HCT116 (cell line): ENCODE measurements at regions of chr22 and their contacts with region 1.

Region 1: GRCh38 chr22:20606041-20606783 is 98.8 kb downstream of the MED15 start:
- DNase-seq: peak; percentile 83
- ATAC-seq: peak; percentile 98
- H3K4me3 ChIP-seq: no peak overlapping the region
- H3K27ac ChIP-seq: no peak overlapping the region
- H3K4me1 ChIP-seq: peaks cover 4 to 11% of the 10 kb centered on the region in 2 experiments; a peak in 3 of 4 replicates
- H3K27me3 ChIP-seq: no peaks in the 10 kb centered on the region
- CTCF ChIP-seq: peak; percentile 86 to 95 (median 87)
- POLR2A ChIP-seq: no peak
- RAD21 ChIP-seq: peak; percentile 91

Region 2: DNA sequence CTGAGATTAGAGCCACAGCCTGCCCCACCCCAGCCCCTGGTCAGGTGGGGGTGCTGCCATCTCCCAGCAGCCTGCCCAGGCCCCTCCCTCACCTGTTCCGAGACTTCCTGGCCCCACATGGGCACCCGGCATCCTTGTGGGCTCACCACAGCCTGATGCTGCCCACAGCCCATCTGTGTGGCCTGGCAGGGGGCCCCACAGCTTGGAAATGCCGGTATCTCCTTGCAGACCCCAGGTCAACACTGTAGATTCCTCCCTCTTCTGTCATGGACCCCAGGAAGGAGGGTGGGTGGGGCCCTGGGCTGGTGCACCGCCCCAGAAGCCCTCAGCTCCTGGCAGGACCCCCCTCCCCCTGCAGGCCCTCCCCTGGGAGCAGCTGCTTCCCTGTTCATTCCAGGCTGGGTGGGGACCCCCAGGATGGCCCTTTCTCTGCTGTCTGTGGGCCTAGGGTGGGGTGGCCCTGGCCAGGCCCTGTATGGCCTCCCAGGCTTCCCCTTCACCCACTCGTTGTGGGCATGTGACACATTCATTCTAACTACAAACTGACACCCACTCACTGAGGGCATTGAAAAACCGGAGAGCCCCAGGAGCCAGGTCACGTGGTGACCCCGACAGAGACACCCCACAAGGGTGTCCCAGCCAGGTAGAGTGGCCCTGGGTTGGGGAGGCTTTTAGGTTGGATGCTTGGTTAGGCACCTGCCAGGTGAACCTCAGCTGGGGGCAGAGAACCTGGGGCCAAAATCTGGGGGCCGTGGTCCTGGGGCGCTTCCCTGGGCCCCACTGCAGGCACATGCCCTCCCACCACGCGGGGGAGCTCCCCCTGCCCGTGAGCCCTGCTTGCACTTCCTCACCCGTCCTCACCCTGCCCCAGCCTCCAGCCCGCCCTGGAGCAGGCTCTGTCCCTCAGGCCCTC is 411.3 kb before region 1 on chr22:
- CTCF ChIA-PET with region 1: no interaction called
- POLR2A ChIA-PET with region 1: no interaction called
- RAD21 ChIA-PET with region 1: no interaction called
- intact Hi-C with region 1: no loop called
- DNase-seq: no peak
- ATAC-seq: no peak
- H3K4me3 ChIP-seq: no peak overlapping the region
- H3K27ac ChIP-seq: no peak overlapping the region
- H3K4me1 ChIP-seq: no peaks in the 10 kb centered on the region
- H3K27me3 ChIP-seq: 0 out of 2 replicates have a peak, but pooled peaks cover 3% of the 10 kb centered on the region
- CTCF ChIP-seq: no peak
- POLR2A ChIP-seq: no peak
- RAD21 ChIP-seq: no peak

Region 3: DNA sequence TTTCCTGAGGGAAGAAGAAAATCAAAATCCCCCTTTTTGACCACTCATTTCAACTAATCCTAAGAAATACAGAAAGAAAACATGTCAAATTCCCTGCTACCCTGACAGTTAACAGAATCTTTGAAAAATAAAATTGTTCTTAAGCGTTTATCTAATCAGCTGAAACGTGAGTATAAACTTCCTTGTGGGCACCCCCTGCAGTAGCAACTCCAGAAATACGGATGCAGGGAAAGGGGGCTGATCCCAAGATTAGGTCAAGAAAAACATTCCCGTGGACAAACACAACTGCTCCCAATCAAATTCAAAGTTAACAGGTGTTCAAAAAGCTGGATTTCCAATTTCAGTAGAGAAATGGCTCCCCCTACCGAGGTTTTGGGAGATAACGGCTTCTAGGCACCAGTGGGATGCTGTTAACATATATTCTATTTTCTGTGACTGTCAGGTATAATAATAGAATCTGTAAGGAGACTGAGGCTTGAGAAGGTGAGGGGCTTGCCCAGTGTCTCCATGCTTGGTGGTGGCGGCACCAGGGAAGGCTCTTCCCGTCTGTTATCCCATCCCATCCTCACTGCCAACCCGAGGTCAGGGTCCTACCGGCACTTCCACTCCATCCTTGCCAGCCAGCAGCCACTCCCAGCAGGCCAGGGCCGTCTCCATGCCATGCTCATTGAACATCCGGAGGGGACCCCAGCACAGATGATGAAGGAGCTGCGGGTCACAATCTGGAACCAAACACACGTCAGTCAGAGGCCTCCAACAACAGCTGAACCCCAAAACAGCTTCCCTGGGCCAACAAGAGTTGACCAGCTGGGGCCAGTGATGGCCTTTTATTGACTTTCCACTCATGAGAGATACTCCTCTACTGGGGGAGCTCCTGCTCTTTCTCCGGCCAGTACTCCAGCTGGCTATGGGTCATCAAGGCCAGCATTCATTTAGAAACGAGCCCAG is 135.7 kb after region 1 on chr22:
- CTCF ChIA-PET with region 1: interaction called, 5 read pairs
- POLR2A ChIA-PET with region 1: no interaction called
- RAD21 ChIA-PET with region 1: no interaction called
- intact Hi-C with region 1: loop called (anchors 2 kb)
- DNase-seq: peak; percentile 18
- ATAC-seq: peak; percentile 63; the same call in 1 of the 2 replicates
- H3K4me3 ChIP-seq: no peak overlapping the region
- H3K27ac ChIP-seq: no peak overlapping the region
- H3K4me1 ChIP-seq: no peaks in the 10 kb centered on the region
- H3K27me3 ChIP-seq: no peaks in the 10 kb centered on the region
- CTCF ChIP-seq: peak; percentile 57 to 73 (median 64); a peak in 5 of 6 replicates
- POLR2A ChIP-seq: no peak
- RAD21 ChIP-seq: peak; percentile 70

Region 4: DNA sequence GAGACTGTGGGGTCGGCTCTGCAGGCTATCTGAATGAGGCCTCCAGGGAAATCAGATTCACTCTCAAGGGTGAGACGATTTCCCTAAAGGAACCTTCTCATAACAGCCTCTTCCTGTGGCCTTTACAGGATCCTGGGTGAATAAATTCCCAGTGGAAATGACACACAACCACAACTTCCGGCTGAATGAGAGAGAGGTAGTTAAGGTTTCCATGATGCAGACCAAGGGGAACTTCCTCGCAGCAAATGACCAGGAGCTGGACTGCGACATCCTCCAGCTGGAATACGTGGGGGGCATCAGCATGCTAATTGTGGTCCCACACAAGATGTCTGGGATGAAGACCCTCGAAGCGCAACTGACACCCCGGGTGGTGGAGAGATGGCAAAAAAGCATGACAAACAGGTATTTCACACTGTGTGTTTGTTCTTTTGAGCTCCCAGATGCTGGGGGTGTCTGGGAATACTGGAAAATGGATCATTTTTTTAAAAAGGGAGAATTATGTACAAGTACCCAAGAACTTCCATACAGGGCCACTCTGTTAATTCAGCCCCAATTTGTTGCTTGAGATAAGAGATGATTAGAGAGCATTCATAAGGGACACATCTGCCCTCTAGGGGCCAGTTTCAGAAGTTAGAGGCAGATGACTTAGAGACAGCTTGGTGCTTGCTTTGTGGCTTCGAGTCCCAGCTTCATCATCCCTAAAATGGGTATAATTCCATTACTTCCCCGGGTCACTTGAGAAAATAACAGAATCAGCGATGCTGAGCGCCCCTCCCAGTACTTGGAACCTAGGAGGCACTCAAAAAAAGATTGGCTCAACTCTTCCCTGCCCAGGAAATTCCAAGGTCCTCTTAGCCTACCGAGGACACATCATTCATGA is 177.9 kb after region 1 on chr22:
- CTCF ChIA-PET with region 1: no interaction called
- POLR2A ChIA-PET with region 1: no interaction called
- RAD21 ChIA-PET with region 1: no interaction called
- intact Hi-C with region 1: loop called (anchors 1 kb)
- DNase-seq: peak; percentile 34
- ATAC-seq: peak; percentile 95
- H3K4me3 ChIP-seq: no peak overlapping the region
- H3K27ac ChIP-seq: no peak overlapping the region
- H3K4me1 ChIP-seq: peaks cover 0 to 1% of the 10 kb centered on the region in 2 experiments; a peak in 1 of 4 replicates
- H3K27me3 ChIP-seq: no peaks in the 10 kb centered on the region
- CTCF ChIP-seq: peak; percentile 51 to 84 (median 84); a peak in 5 of 6 replicates
- POLR2A ChIP-seq: no peak
- RAD21 ChIP-seq: peak; percentile 61